Activated CD4-positive, alpha-beta memory T cell treated with anti-CD3 and anti-CD28 coated beads for 36 hours (primary cell): ENCODE measurements at regions of chr4 and their contacts with region 1.

Region 1: DNA sequence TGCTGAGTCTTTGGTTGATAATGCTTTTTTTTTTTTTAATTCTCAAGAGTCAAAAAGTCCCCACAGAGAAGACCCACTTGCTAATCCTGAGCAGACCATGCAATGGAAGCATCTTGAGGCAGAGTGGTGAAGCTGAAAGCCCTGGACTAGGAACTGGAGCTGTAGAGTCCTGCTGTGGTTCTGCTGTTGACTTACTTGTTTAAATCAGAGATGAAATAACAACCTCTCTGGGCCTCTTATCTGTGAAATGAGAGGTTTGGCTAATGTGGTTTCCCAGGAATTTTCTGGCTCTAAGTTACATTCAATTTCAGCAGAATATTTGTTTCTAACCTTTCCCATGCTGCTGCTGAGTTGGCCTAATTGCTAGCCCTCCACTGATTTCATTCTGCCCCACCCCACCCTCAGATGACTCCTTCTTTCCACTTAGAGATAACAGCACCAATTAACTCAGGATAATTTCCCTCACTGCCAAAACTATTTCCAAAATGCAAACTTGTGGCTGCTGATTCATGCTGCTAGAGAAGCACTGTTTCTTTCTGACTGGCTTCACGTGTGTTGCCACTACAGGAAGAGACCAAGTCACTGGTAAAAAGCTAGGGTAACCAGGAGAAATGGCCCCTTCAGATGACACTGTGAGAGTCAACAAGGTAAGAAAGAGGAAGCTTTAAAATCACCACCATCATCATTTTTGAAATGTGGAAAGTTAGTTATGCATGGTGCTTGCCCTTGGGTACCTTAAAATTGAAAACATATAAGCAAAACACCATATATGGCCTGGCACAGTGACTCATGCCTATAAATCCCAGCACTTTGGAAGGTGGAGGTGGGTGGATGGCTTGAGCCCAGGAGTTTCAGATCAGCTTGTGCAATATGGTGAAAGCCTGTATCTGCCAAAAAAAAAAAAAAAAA is 326.4 kb downstream of the DCHS2 start:
- DNase-seq: peak; percentile 49
- H3K4me3 Mint-ChIP-seq: no peak overlapping the region
- H3K27ac Mint-ChIP-seq: peak overlapping the region; percentile 11
- H3K4me1 Mint-ChIP-seq: peaks cover 16% of the 10 kb centered on the region
- H3K27me3 Mint-ChIP-seq: peaks cover 9% of the 10 kb centered on the region

Region 2: GRCh38 chr4:153809307-153809706 is 355.9 kb before region 1 on chr4:
- CTCF ChIA-PET with region 1: no interaction called
- POLR2A ChIA-PET with region 1: no interaction called
- intact Hi-C with region 1: loop called (anchors 1 kb)
- DNase-seq: peak; percentile 55
- H3K4me3 Mint-ChIP-seq: no peak overlapping the region
- H3K27ac Mint-ChIP-seq: no peak overlapping the region
- H3K4me1 Mint-ChIP-seq: peaks cover 21% of the 10 kb centered on the region
- H3K27me3 Mint-ChIP-seq: peaks cover 2% of the 10 kb centered on the region

Region 3: GRCh38 chr4:153943738-153944415 is 221.3 kb before region 1 on chr4:
- CTCF ChIA-PET with region 1: no interaction called
- POLR2A ChIA-PET with region 1: no interaction called
- intact Hi-C with region 1: loop called (anchors 1 kb)
- DNase-seq: no peak
- H3K4me3 Mint-ChIP-seq: no peak overlapping the region
- H3K27ac Mint-ChIP-seq: no peak overlapping the region
- H3K4me1 Mint-ChIP-seq: peaks cover 12% of the 10 kb centered on the region
- H3K27me3 Mint-ChIP-seq: peaks cover 28% of the 10 kb centered on the region

Region 4: GRCh38 chr4:153997516-153997915 is 167.7 kb before region 1 on chr4:
- CTCF ChIA-PET with region 1: no interaction called
- POLR2A ChIA-PET with region 1: no interaction called
- intact Hi-C with region 1: no loop called
- DNase-seq: no peak
- H3K4me3 Mint-ChIP-seq: no peak overlapping the region
- H3K27ac Mint-ChIP-seq: no peak overlapping the region
- H3K4me1 Mint-ChIP-seq: no peaks in the 10 kb centered on the region
- H3K27me3 Mint-ChIP-seq: peaks cover 9% of the 10 kb centered on the region